Activated CD4-positive, alpha-beta T cell treated with anti-CD3 and anti-CD28 coated beads for 36 hours (primary cell): ENCODE measurements at regions of chr10 and their contacts with region 1.

Region 1: GRCh38 chr10:72297968-72298773 is 24.4 kb downstream of the DDIT4 start:
- DNase-seq: peak; percentile 98
- ATAC-seq: peak; percentile 72
- H3K4me3 Mint-ChIP-seq: peak overlapping the region; percentile 80
- H3K27ac Mint-ChIP-seq: peak overlapping the region; percentile 99
- H3K4me1 Mint-ChIP-seq: peaks cover 68% of the 10 kb centered on the region
- H3K27me3 Mint-ChIP-seq: no peaks in the 10 kb centered on the region

Region 2: GRCh38 chr10:72162978-72163377 is 135.2 kb before region 1 on chr10:
- CTCF ChIA-PET with region 1: interaction called, 3 read pairs
- POLR2A ChIA-PET with region 1: no interaction called
- intact Hi-C with region 1: loop called in 1 of 2 experiments (anchors 2 kb)
- DNase-seq: peak; percentile 25
- ATAC-seq: peak; percentile 94
- H3K4me3 Mint-ChIP-seq: no peak overlapping the region
- H3K27ac Mint-ChIP-seq: peak overlapping the region; percentile 85
- H3K4me1 Mint-ChIP-seq: peaks cover 35% of the 10 kb centered on the region
- H3K27me3 Mint-ChIP-seq: no peaks in the 10 kb centered on the region

Region 3: GRCh38 chr10:72273410-72274212 is 24.6 kb before region 1 on chr10 and contains the start of gene DDIT4:
- CTCF ChIA-PET with region 1: interaction called, 9 read pairs
- POLR2A ChIA-PET with region 1: interaction called, 137 read pairs
- intact Hi-C with region 1: loop called (anchors 1 kb)
- DNase-seq: peak; percentile 100
- ATAC-seq: peak; percentile 84
- H3K4me3 Mint-ChIP-seq: peak within 1 kb of the TSS; percentile 95
- H3K27ac Mint-ChIP-seq: peak within 1 kb of the TSS; percentile 99
- H3K4me1 Mint-ChIP-seq: peaks cover 44% of the 10 kb centered on the region
- H3K27me3 Mint-ChIP-seq: no peaks in the 10 kb centered on the region
- total RNA-seq, gene DDIT4: 750 to 1,039 TPM

Region 4: DNA sequence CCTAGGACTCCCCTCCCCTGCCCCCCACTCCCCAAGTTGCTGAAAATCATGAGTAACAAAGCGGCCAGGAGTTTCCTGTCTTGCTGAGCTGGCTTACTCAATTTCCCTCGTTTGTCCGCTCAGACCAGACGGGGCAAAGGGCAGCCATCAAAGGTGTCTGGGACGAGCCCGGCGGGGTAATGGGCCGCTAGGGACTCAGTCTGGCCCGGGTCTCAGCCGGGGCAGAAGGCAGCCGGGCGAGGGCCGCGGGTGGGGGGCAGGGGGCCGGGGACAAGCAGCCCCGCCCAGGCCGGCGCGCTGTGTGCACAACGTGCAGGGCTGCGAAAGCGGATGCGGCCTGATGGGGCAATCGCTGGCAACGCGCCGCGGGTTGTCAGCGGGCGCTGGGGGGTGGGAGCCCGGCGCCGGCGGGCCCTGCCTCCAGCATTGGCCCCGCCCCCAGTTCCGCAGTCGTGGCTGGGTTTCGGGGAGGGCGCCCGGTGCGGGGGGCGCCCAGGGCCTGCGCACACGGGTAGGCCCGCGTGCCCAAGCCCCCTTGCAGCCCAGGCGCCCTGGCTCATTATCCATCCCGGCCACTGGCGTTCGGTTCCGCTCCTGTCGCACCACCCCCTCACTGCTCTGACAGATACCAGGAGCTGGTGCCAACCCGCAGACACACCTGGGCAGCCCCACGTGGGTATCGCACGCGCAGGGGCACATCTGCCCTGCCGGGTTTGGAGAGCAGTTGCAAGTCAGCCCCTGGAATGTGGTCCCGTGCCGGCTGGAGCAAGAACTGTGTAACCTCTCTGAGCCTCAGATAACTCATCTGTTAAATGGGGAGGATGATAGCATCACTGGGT is 21.5 kb after region 1 on chr10:
- CTCF ChIA-PET with region 1: interaction called, 8 read pairs
- POLR2A ChIA-PET with region 1: interaction called, 124 read pairs
- intact Hi-C with region 1: loop called (anchors 1 kb)
- DNase-seq: peak; percentile 95
- ATAC-seq: peak; percentile 48
- H3K4me3 Mint-ChIP-seq: peak overlapping the region; percentile 86
- H3K27ac Mint-ChIP-seq: peak overlapping the region; percentile 100
- H3K4me1 Mint-ChIP-seq: peaks cover 84% of the 10 kb centered on the region
- H3K27me3 Mint-ChIP-seq: no peaks in the 10 kb centered on the region